Sigmoid colon (tissue), 7 donors: ENCODE measurements at regions of chr1 and their contacts with region 1.

Region 1: DNA sequence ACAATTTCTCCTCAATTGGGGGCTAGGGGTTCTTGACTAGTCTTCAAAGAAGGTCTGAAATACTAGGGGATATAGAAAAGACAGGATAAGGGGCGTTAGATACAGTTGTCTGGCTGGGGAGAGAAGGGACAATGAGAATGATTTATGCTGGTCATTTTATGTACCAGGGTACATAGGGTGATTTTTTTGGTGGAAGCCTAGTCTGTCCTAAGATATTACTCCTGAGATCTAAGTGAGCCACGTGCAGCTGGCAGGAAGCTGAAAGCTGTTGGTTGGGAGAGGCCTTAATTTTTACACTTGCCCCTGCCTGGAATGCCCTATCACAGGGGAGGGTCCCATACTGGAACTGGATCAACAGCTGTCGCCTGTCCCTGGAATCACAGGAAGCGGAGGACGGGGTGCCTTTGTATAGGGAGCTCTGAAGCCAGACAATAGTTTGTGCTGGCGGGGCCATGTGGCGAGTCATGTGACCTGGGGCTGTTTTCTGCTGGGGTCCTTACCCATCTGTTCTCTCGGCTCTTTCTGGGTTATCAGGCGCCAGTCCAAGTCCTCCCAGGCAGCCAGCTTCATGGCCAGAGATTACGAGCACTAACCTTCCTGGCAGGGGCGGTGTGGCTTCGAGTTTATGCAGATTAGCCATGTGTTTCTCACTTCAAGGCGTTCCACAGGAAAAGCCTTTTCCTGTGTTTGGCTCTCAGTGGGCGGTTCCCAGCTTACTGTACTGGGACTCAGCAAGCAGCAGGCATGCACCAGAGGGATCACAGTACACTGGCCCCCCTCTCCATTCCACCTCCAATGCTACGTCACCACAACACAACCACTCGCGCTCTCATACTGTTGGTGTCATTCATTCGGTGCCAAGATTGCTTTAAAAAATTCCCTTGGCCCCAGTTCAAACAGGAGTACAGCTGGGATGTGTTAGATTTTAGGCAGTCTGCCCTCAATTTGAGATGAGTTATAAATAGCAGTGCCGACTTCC is 27.5 kb downstream of the ARID1A start:
- DNase-seq: peak; percentile 97
- H3K4me3 ChIP-seq: no peak overlapping the region
- H3K27ac ChIP-seq: peak overlapping the region; percentile 59 to 80 (median 67)
- H3K4me1 ChIP-seq: peaks cover 0 to 99% (median 85%) of the 10 kb centered on the region in 4 donors
- H3K27me3 ChIP-seq: no peaks in the 10 kb centered on the region
- CTCF ChIP-seq: no peak
- EP300 ChIP-seq: peak in 3 of 4 donors; percentile 11 to 90 (median 86)
- POLR2A ChIP-seq: no peak

Region 2: GRCh38 chr1:26666855-26667254 is 56.4 kb before region 1 on chr1:
- intact Hi-C with region 1: no loop called
- DNase-seq: no peak
- H3K4me3 ChIP-seq: no peak overlapping the region
- H3K27ac ChIP-seq: no peak overlapping the region
- H3K4me1 ChIP-seq: no peaks in the 10 kb centered on the region
- H3K27me3 ChIP-seq: no peaks in the 10 kb centered on the region
- CTCF ChIP-seq: no peak
- EP300 ChIP-seq: no peak
- POLR2A ChIP-seq: no peak

Region 3: DNA sequence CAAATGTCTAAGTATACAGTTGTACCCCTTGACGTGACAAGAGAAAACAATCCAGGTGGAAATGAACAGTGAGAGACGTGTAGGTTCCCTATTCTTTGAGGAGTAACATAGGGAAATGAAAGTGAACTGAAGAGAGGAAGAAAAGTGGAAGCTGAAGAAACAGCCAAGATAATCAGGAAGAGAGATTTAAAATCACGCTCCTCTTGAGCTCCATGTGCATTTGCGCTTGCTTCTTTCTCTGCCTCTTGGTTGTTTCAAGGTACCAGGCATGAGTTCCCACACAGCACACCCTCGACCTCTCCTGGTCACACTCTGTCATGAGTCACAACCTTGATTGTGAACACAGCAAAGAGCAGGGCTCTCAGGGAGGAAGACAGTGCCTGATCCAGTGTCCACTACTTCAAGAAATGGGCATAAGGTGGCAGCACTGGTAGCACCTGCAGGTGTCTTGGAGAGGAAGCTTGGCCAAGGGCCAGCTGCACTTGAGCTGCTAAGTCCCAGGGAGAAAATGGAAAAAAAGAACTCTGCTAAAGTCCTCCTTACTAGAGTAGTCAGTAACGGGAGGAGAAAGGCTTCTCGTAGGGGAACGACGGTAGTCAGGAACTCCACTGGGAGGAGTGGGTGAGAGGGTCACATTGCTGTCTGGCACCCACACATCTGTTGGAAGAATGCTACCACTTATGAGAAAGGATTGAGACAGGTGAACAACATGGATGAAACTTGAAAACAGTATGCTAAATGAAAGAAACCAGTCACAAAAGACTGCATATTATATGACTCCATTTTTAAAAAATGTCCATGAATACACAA is 45.8 kb before region 1 on chr1:
- intact Hi-C with region 1: loop called (anchors 5 kb)
- DNase-seq: peak; percentile 91
- H3K4me3 ChIP-seq: peak overlapping the region in 3 of 4 donors; percentile 5 to 16 (median 13)
- H3K27ac ChIP-seq: peak overlapping the region; percentile 49 to 56 (median 51)
- H3K4me1 ChIP-seq: peaks cover 0 to 14% (median 11%) of the 10 kb centered on the region in 4 donors
- H3K27me3 ChIP-seq: no peaks in the 10 kb centered on the region
- CTCF ChIP-seq: peak in 3 of 4 experiments; percentile 62 to 81 (median 76)
- EP300 ChIP-seq: no peak
- POLR2A ChIP-seq: no peak

Region 4: GRCh38 chr1:26779098-26779668 is 55.9 kb after region 1 on chr1:
- intact Hi-C with region 1: loop called (anchors 5 kb)
- DNase-seq: no peak
- H3K4me3 ChIP-seq: no peak overlapping the region
- H3K27ac ChIP-seq: no peak overlapping the region
- H3K4me1 ChIP-seq: peaks cover 0 to 48% (median 40%) of the 10 kb centered on the region in 4 donors
- H3K27me3 ChIP-seq: no peaks in the 10 kb centered on the region
- CTCF ChIP-seq: no peak
- EP300 ChIP-seq: no peak
- POLR2A ChIP-seq: no peak

Region 5: GRCh38 chr1:26811057-26811456 is 87.8 kb after region 1 on chr1:
- intact Hi-C with region 1: no loop called
- DNase-seq: no peak
- H3K4me3 ChIP-seq: no peak overlapping the region
- H3K27ac ChIP-seq: no peak overlapping the region
- H3K4me1 ChIP-seq: peaks cover 0 to 3% (median 0%) of the 10 kb centered on the region in 4 donors
- H3K27me3 ChIP-seq: no peaks in the 10 kb centered on the region
- CTCF ChIP-seq: no peak
- EP300 ChIP-seq: no peak
- POLR2A ChIP-seq: no peak

Region 6: GRCh38 chr1:27071049-27071416 is 347.7 kb after region 1 on chr1:
- intact Hi-C with region 1: no loop called
- DNase-seq: no peak
- H3K4me3 ChIP-seq: no peak overlapping the region
- H3K27ac ChIP-seq: no peak overlapping the region
- H3K4me1 ChIP-seq: no peaks in the 10 kb centered on the region
- H3K27me3 ChIP-seq: no peaks in the 10 kb centered on the region
- CTCF ChIP-seq: no peak
- EP300 ChIP-seq: no peak
- POLR2A ChIP-seq: no peak